ENCODE measurements at regions of chr3 and their contacts with region 1.

Region 1: GRCh38 chr3:108914774-108915641 is 38.7 kb downstream of the GUCA1C start:
- DNase-seq: peak; percentile 73
- ATAC-seq: peak; percentile 70
- H3K4me3 ChIP-seq: no peak overlapping the region
- H3K4me3 Mint-ChIP-seq: no peak overlapping the region
- H3K27ac ChIP-seq: no peak overlapping the region
- H3K27ac Mint-ChIP-seq: no peak overlapping the region
- H3K4me1 ChIP-seq: no peaks in the 10 kb centered on the region
- H3K4me1 Mint-ChIP-seq: no peaks in the 10 kb centered on the region
- H3K27me3 ChIP-seq: no peaks in the 10 kb centered on the region
- H3K27me3 Mint-ChIP-seq: peaks cover 29% of the 10 kb centered on the region
- CTCF ChIP-seq: peak; percentile 89

Region 2: DNA sequence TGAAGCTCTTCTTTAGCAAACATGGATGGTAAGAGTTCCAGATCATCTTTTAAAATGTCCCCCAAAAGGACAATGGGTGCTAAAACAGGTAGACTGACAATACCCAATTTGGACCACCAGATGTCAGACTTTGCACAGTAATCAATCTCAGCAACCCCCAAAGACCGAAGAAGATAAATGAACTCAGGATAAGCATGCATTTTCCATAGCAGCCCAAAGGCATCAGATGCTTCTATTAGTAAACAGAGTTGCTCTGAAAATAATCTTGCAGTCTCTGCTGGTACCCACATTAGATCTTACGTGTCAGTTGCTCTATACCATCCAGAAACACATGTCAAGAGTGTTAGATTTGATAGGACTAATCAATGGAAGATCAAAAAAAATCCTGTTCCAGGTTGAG is 425.2 kb before region 1 on chr3:
- CTCF ChIA-PET with region 1: interaction called, 64 read pairs
- POLR2A ChIA-PET with region 1: no interaction called
- intact Hi-C with region 1: no loop called
- DNase-seq: peak; percentile 78
- ATAC-seq: peak; percentile 68
- H3K4me3 ChIP-seq: no peak overlapping the region
- H3K4me3 Mint-ChIP-seq: no peak overlapping the region
- H3K27ac ChIP-seq: no peak overlapping the region
- H3K27ac Mint-ChIP-seq: no peak overlapping the region
- H3K4me1 ChIP-seq: peaks cover 0 to 2% of the 10 kb centered on the region in 2 donors
- H3K4me1 Mint-ChIP-seq: peaks cover 4% of the 10 kb centered on the region
- H3K27me3 ChIP-seq: no peaks in the 10 kb centered on the region
- H3K27me3 Mint-ChIP-seq: no peaks in the 10 kb centered on the region
- CTCF ChIP-seq: peak; percentile 87

Region 3: DNA sequence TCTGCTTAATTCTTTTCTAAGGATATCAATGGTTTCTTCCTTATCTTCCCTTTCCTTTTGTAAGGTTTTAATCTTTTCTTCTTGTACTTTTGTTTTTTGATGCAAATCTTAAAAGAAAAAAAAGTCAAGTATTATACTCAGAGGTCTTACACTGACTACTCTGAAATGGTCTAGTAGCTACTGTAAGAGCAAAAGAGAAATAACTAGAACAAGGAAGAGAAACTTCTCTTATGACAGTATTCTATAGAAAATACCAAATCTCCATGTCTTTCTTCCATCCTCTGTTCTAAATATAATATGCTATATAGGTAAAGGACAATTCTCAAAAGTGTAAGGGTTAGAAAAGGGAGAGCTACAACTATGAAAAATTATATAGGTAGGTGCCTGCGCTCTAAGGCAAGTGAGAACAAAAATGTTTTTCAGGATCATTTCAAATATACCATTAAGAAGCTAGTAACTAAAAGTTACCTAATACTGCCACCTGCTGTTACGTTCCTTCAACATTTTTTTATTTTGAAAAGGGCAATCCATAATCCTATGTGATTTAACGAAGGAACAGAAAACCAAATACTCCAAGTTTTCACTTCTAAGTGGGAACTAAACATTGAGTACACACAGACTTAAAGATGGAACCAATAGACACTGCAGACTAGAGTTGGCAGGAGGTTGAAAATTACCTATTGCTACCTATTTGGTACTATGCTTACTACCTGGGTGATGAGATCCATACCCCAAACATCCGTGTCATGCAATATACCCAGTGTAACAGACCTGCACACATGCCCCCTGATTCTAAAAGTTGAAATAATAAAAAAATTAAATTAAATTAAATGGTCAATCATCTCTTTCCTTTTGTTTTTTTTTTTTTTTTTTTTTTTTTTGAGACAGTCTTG is 362.5 kb before region 1 on chr3:
- CTCF ChIA-PET with region 1: interaction called, 11 read pairs
- POLR2A ChIA-PET with region 1: no interaction called
- intact Hi-C with region 1: loop called (anchors 10 kb)
- DNase-seq: peak; percentile 70
- ATAC-seq: peak; percentile 51
- H3K4me3 ChIP-seq: no peak overlapping the region
- H3K4me3 Mint-ChIP-seq: no peak overlapping the region
- H3K27ac ChIP-seq: peak overlapping the region in 1 of 2 donors; percentile 65
- H3K27ac Mint-ChIP-seq: peak overlapping the region; percentile 18
- H3K4me1 ChIP-seq: peaks cover 0 to 8% of the 10 kb centered on the region in 2 donors
- H3K4me1 Mint-ChIP-seq: peaks cover 7% of the 10 kb centered on the region
- H3K27me3 ChIP-seq: no peaks in the 10 kb centered on the region
- H3K27me3 Mint-ChIP-seq: no peaks in the 10 kb centered on the region
- CTCF ChIP-seq: peak; percentile 75

Region 4: GRCh38 chr3:108662130-108662738 is 252.8 kb before region 1 on chr3:
- CTCF ChIA-PET with region 1: interaction called, 122 read pairs
- POLR2A ChIA-PET with region 1: no interaction called
- intact Hi-C with region 1: loop called (anchors 1 kb)
- DNase-seq: peak; percentile 76
- ATAC-seq: peak; percentile 56
- H3K4me3 ChIP-seq: no peak overlapping the region
- H3K4me3 Mint-ChIP-seq: no peak overlapping the region
- H3K27ac ChIP-seq: no peak overlapping the region
- H3K27ac Mint-ChIP-seq: no peak overlapping the region
- H3K4me1 ChIP-seq: no peaks in the 10 kb centered on the region
- H3K4me1 Mint-ChIP-seq: peaks cover 2% of the 10 kb centered on the region
- H3K27me3 ChIP-seq: no peaks in the 10 kb centered on the region
- H3K27me3 Mint-ChIP-seq: no peaks in the 10 kb centered on the region
- CTCF ChIP-seq: peak; percentile 92

Region 5: GRCh38 chr3:108673988-108674661 is 240.9 kb before region 1 on chr3:
- CTCF ChIA-PET with region 1: interaction called, 122 read pairs
- POLR2A ChIA-PET with region 1: no interaction called
- intact Hi-C with region 1: no loop called
- DNase-seq: no peak
- ATAC-seq: no peak
- H3K4me3 ChIP-seq: no peak overlapping the region
- H3K4me3 Mint-ChIP-seq: no peak overlapping the region
- H3K27ac ChIP-seq: no peak overlapping the region
- H3K27ac Mint-ChIP-seq: no peak overlapping the region
- H3K4me1 ChIP-seq: peaks cover 6 to 8% of the 10 kb centered on the region in 2 donors
- H3K4me1 Mint-ChIP-seq: peaks cover 12% of the 10 kb centered on the region
- H3K27me3 ChIP-seq: no peaks in the 10 kb centered on the region
- H3K27me3 Mint-ChIP-seq: no peaks in the 10 kb centered on the region
- CTCF ChIP-seq: no peak

Region 6: DNA sequence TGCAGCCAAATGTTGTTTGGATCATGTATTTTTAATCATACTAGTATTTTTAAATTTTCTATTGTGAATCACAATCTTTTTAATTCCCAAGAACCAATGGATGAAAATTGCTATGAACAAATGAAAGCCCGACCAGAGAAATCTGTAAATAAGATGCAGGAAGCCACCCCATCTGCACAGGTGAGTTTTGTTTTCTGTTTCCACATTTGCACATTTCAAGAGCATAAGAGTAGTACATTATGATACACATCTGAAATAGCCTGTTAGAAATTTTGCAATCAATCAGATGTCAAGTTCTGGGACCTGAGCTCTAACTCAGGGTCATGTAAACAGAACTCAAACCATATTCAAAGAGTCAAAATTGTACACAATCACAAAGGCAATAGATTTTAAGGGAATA is 65.9 kb before region 1 on chr3:
- CTCF ChIA-PET with region 1: no interaction called
- POLR2A ChIA-PET with region 1: no interaction called
- intact Hi-C with region 1: no loop called
- DNase-seq: no peak
- ATAC-seq: no peak
- H3K4me3 ChIP-seq: no peak overlapping the region
- H3K4me3 Mint-ChIP-seq: no peak overlapping the region
- H3K27ac ChIP-seq: no peak overlapping the region
- H3K27ac Mint-ChIP-seq: no peak overlapping the region
- H3K4me1 ChIP-seq: no peaks in the 10 kb centered on the region
- H3K4me1 Mint-ChIP-seq: no peaks in the 10 kb centered on the region
- H3K27me3 ChIP-seq: no peaks in the 10 kb centered on the region
- H3K27me3 Mint-ChIP-seq: peaks cover 12% of the 10 kb centered on the region
- CTCF ChIP-seq: no peak

Region 7: DNA sequence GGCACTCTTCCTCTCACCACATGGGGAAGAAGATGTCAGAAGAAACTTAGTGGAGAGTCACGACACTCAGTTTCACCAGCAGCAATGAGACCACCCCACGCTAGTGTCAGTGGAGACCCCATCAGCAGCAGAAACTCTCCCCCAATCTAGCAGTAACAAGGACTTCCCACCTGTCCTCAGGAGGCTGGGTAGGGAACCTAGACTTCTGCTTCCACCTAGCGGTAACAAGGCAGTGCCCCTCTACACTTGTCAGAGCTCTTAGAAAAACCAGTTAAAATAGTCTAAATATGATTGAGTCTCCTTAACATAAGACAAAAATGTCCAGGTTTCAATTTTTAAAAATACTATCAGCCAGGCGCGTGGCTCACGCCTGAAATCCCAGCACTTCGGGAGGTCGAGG is 35.1 kb before region 1 on chr3:
- CTCF ChIA-PET with region 1: no interaction called
- POLR2A ChIA-PET with region 1: no interaction called
- intact Hi-C with region 1: no loop called
- DNase-seq: no peak
- ATAC-seq: no peak
- H3K4me3 ChIP-seq: no peak overlapping the region
- H3K4me3 Mint-ChIP-seq: no peak overlapping the region
- H3K27ac ChIP-seq: no peak overlapping the region
- H3K27ac Mint-ChIP-seq: no peak overlapping the region
- H3K4me1 ChIP-seq: no peaks in the 10 kb centered on the region
- H3K4me1 Mint-ChIP-seq: no peaks in the 10 kb centered on the region
- H3K27me3 ChIP-seq: no peaks in the 10 kb centered on the region
- H3K27me3 Mint-ChIP-seq: peaks cover 11% of the 10 kb centered on the region
- CTCF ChIP-seq: no peak

Region 8: GRCh38 chr3:108897883-108898282 is 17.1 kb before region 1 on chr3:
- CTCF ChIA-PET with region 1: interaction called, 10 read pairs
- POLR2A ChIA-PET with region 1: no interaction called
- intact Hi-C with region 1: no loop called
- DNase-seq: no peak
- ATAC-seq: no peak
- H3K4me3 ChIP-seq: no peak overlapping the region
- H3K4me3 Mint-ChIP-seq: no peak overlapping the region
- H3K27ac ChIP-seq: no peak overlapping the region
- H3K27ac Mint-ChIP-seq: no peak overlapping the region
- H3K4me1 ChIP-seq: no peaks in the 10 kb centered on the region
- H3K4me1 Mint-ChIP-seq: peaks cover 4% of the 10 kb centered on the region
- H3K27me3 ChIP-seq: no peaks in the 10 kb centered on the region
- H3K27me3 Mint-ChIP-seq: peaks cover 4% of the 10 kb centered on the region
- CTCF ChIP-seq: no peak

Region 9: DNA sequence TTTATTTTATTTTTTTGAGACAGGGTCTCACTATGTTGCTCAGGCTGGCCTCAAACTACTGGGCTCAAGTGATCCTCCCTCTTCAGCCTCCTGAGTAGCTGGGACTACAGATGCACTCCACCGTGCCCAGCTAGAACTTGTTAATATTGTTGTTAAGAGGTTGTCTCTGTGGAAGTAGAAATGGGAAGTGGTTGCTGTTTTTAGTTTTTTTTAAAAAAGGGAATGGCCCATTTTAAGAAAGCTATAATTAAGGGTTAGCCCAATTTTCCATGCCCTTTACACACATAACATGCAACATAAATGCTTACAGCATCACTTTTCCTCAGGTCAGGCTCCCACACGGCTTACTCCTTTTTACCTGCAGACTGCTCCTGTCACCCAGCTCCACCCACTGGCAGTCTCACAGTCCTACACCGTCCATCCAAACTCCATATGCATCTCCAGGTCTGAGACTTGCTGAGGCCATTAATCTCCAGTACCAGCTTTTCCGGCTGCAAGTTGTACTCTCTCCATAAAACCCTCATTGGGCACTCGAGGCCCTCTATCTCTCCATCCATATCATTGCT is 183.2 kb after region 1 on chr3:
- CTCF ChIA-PET with region 1: no interaction called
- POLR2A ChIA-PET with region 1: no interaction called
- intact Hi-C with region 1: no loop called
- DNase-seq: no peak
- ATAC-seq: no peak
- H3K4me3 ChIP-seq: no peak overlapping the region
- H3K4me3 Mint-ChIP-seq: no peak overlapping the region
- H3K27ac ChIP-seq: no peak overlapping the region
- H3K27ac Mint-ChIP-seq: no peak overlapping the region
- H3K4me1 ChIP-seq: no peaks in the 10 kb centered on the region
- H3K4me1 Mint-ChIP-seq: no peaks in the 10 kb centered on the region
- H3K27me3 ChIP-seq: no peaks in the 10 kb centered on the region
- H3K27me3 Mint-ChIP-seq: no peaks in the 10 kb centered on the region
- CTCF ChIP-seq: no peak

Measured in B cell (primary cell).